ENCODE measurements at regions of chr7 and their contacts with region 1.

Region 1: DNA sequence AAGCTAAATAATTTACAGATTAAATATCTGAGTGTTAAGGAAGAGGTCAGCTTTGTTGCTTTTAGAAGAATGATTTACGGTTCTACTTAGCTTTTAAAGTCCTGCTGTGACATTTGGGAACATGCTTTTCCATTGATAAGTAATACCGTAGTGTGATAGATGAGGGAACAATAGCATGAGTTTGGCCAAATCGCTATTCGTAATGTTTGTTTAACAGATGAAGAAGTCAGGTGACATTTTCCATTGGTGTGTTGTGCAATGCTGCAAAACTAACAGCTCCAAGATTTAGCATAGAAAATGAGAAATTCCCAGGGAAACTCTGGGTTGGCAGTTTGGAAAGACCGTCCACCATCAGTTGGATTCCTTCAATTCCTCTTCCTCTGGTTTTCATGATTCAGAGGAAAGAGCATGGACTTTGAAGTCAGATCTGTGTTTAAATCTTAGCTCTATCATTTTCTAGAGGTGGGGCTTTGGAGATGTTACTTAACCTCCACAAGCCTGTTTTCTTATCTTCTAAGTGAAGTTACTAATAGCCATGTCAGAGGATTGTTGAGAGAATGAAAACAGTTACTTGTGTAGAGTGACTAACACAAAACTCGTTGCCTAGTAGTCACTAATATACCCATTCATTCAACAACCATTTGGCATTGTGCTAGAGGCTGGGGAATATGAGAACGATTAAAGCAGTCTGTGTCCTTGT is 140.4 kb upstream of the BMPER start:
- DNase-seq: no peak
- ATAC-seq: peak; percentile 17

Region 2: DNA sequence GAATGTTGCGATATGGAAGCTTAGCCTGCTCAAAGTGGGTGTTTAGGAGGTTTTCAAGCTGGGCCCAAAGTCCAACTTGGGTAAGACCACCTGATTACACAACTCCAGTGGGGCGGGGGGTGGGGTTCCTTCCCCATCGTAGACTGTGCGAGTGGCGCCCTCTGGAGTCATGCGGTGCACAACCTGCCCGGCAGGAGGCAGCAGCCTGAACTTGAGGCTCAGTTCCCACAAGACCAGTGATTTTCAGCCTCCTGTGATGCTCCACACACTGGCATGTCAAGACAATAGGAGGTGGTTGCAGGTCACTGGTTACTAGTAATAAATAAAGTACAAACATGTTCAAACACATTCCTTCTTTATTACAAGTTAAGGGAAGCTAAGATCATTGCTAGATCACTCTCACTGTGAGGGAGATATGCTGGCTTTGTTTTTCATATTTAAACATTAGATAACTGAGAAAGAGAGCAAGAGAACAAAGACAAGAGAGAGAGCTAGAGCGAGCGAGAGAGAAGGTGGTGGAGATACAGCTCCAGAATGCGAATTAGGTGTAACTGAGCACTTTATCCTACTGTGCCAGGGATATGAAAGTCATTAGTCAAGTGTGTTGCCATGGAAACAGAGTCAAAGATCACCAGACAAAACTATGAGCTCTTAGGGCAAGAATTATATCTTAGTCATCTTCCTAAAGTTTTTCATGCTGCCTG is 43.0 kb after region 1 on chr7:
- intact Hi-C with region 1: loop called (anchors 5 kb)
- DNase-seq: peak; percentile 64
- ATAC-seq: no peak

Measured in Right ventricle myocardium inferior (tissue), 1 donor.